ENCODE measurements at regions of chr16 and their contacts with region 1.

Region 1: DNA sequence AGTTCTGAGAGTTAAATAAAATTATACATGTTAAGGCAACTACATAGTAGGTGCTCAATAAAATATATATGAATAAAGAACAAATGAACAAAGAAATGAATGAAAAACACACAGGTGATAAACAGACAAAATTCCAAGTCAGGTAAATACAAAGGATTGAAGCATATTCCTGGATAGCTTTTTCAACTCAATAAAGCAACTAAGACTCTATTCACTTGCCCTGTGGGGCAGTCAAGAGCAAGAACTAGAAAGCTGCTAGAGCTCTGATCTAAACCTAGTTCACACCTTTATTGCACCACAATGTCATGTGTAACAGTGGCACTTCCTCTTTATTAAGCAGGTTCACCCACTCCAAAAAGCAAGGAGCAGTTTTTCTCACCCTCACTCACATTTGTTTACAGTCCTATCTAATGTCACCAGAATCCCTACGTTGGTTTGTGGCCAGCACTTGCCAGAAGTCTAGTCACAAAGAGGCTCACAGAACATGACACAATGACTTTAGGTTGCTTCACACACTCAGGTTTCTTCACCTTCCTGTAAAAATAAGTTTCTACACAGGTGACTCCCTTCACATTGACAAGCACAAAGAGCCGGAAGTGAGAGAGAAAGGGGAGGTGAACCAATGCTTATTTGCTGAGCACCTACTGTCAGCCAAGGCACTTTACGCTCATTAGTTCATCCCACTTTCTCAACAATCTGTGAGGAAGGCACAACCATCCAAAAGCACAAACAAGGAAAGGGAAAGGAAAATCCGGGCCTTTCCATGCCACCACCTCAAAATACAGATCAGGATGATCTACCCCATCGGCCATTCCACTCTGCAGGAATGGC is 70.8 kb downstream of the XPO6 start:
- DNase-seq: peak; percentile 90
- ATAC-seq: peak; percentile 89
- H3K4me3 ChIP-seq: peak overlapping the region; percentile 34; the same call in 1 of the 2 replicates
- H3K27ac ChIP-seq: peak overlapping the region; percentile 99
- H3K4me1 ChIP-seq: peaks cover 26% of the 10 kb centered on the region
- H3K27me3 ChIP-seq: no peaks in the 10 kb centered on the region
- CTCF ChIP-seq: peak; percentile 20 to 57 (median 36); a peak in 4 of 6 replicates
- EP300 ChIP-seq: peak; percentile 74 to 85; a peak in 3 of 4 replicates
- POLR2A ChIP-seq: peak; percentile 54; the same call in 1 of the 2 replicates
- RAD21 ChIP-seq: peak; percentile 38; the same call in 1 of the 2 replicates

Region 2: GRCh38 chr16:28181515-28181914 is 40.5 kb after region 1 on chr16:
- CTCF ChIA-PET with region 1: interaction called, 13 read pairs
- POLR2A ChIA-PET with region 1: interaction called, 43 read pairs
- RAD21 ChIA-PET with region 1: interaction called, 48 read pairs
- SMC1A ChIA-PET with region 1: interaction called, 26 read pairs
- in situ Hi-C with region 1: no loop called
- intact Hi-C with region 1: loop called (anchors 5 kb)
- DNase-seq: no peak
- ATAC-seq: peak; percentile 48
- H3K4me3 ChIP-seq: peak overlapping the region; percentile 57; the same call in 1 of the 2 replicates
- H3K27ac ChIP-seq: peak overlapping the region; percentile 89
- H3K4me1 ChIP-seq: peaks cover 39% of the 10 kb centered on the region
- H3K27me3 ChIP-seq: no peaks in the 10 kb centered on the region
- CTCF ChIP-seq: no peak
- EP300 ChIP-seq: no peak
- POLR2A ChIP-seq: no peak
- RAD21 ChIP-seq: no peak

Region 3: GRCh38 chr16:28188085-28188916 is 47.3 kb after region 1 on chr16:
- CTCF ChIA-PET with region 1: interaction called, 13 read pairs
- POLR2A ChIA-PET with region 1: interaction called, 43 read pairs
- RAD21 ChIA-PET with region 1: interaction called, 48 read pairs
- SMC1A ChIA-PET with region 1: interaction called, 29 read pairs
- in situ Hi-C with region 1: no loop called
- intact Hi-C with region 1: loop called (anchors 5 kb)
- DNase-seq: peak; percentile 91
- ATAC-seq: peak; percentile 79
- H3K4me3 ChIP-seq: peak overlapping the region; percentile 53
- H3K27ac ChIP-seq: peak overlapping the region; percentile 98
- H3K4me1 ChIP-seq: peaks cover 52% of the 10 kb centered on the region
- H3K27me3 ChIP-seq: no peaks in the 10 kb centered on the region
- CTCF ChIP-seq: no peak
- EP300 ChIP-seq: peak; percentile 40 to 82; a peak in 2 of 4 replicates
- POLR2A ChIP-seq: no peak
- RAD21 ChIP-seq: no peak

Region 4: GRCh38 chr16:28193530-28194423 is 52.8 kb after region 1 on chr16:
- CTCF ChIA-PET with region 1: interaction called, 11 read pairs
- POLR2A ChIA-PET with region 1: interaction called, 43 read pairs
- RAD21 ChIA-PET with region 1: interaction called, 48 read pairs
- SMC1A ChIA-PET with region 1: interaction called, 29 read pairs
- in situ Hi-C with region 1: no loop called
- intact Hi-C with region 1: loop called (anchors 5 kb)
- DNase-seq: no peak
- ATAC-seq: peak; percentile 52
- H3K4me3 ChIP-seq: peak overlapping the region; percentile 48; the same call in 1 of the 2 replicates
- H3K27ac ChIP-seq: peak overlapping the region; percentile 86
- H3K4me1 ChIP-seq: peaks cover 49% of the 10 kb centered on the region
- H3K27me3 ChIP-seq: no peaks in the 10 kb centered on the region
- CTCF ChIP-seq: no peak
- EP300 ChIP-seq: no peak
- POLR2A ChIP-seq: peak; percentile 10; the same call in 1 of the 2 replicates
- RAD21 ChIP-seq: no peak